GM12878 (cell line): ENCODE measurements at regions of chr9 and their contacts with region 1.

Region 1: DNA sequence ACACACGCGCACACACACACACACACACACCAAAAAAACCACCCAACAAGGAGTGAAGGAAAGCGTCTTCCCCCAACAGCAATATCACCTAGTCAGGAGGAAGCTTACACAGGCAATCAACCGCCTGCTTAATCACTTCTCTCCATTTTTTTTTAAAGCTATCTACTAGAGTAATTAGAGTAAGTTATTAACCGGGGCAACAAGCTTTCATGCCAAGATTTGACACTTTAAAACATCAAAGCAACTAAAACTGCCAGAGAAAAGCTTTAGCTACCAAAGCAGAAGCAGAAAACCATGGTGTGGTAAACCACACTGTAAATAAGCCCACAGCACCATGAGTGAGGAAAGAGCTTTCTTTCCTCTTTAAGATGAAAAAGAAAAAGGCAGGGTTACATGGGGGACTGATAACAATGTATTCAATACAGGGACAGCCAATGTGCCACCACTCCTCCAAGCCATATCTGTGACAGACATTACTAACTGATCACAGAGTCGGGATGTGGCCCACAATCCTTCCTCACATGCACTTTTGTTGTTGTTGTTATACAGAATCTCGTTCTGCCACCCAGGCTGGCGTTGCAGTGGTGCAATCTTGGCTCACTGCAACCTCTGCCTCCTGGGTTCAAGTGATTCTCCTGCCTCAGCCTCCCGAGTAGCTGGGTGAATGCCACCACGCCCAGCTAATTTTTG is 282.1 kb downstream of the CRB2 start:
- DNase-seq: peak; percentile 75
- ATAC-seq: peak; percentile 89
- H3K4me3 ChIP-seq: no peak overlapping the region
- H3K27ac ChIP-seq: no peak overlapping the region
- H3K4me1 ChIP-seq: peaks cover 7% of the 10 kb centered on the region
- H3K27me3 ChIP-seq: no peaks in the 10 kb centered on the region
- CTCF ChIP-seq: no peak
- EP300 ChIP-seq: peak; percentile 65 to 79; a peak in 3 of 4 replicates
- POLR2A ChIP-seq: no peak
- RAD21 ChIP-seq: no peak

Region 2: DNA sequence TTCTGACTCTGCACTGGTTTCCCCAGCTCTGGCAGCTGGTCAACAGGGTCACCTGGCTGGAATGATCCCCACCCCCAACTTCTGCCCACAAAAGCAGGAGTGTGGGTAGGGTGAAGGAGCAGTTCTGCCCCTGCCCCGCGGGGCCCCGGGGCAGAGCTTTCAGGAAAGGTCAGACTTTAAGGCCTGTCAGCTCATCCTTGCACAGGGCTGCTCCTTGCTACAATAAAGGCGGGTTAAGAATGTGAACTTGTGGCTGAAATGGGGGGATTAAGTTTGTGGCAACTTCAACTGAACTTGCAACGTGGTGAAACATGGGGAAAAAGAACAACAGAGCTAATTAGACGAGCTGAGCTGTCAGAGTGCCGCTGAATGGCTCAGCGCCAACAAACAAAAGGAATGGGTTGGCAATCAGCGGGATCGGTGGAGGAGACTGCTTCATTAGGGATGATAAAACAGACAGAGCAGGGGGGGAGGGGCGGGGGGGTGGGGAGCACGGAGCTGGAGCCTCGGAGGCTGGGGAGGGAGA is 231.3 kb before region 1 on chr9:
- CTCF ChIA-PET with region 1: no interaction called
- POLR2A ChIA-PET with region 1: no interaction called
- RAD21 ChIA-PET with region 1: no interaction called
- SMC1A ChIA-PET with region 1: no interaction called
- in situ Hi-C with region 1: no loop called
- intact Hi-C with region 1: no loop called
- DNase-seq: no peak
- ATAC-seq: no peak
- H3K4me3 ChIP-seq: no peak overlapping the region
- H3K27ac ChIP-seq: no peak overlapping the region
- H3K4me1 ChIP-seq: no peaks in the 10 kb centered on the region
- H3K27me3 ChIP-seq: no peaks in the 10 kb centered on the region
- CTCF ChIP-seq: no peak
- EP300 ChIP-seq: no peak
- POLR2A ChIP-seq: no peak
- RAD21 ChIP-seq: no peak

Region 3: GRCh38 chr9:123608104-123608503 is 30.0 kb before region 1 on chr9:
- CTCF ChIA-PET with region 1: interaction called, 4 read pairs
- POLR2A ChIA-PET with region 1: no interaction called
- RAD21 ChIA-PET with region 1: interaction called, 13 read pairs
- SMC1A ChIA-PET with region 1: interaction called, 4 read pairs
- in situ Hi-C with region 1: no loop called
- intact Hi-C with region 1: no loop called
- DNase-seq: peak; percentile 88
- ATAC-seq: peak; percentile 99
- H3K4me3 ChIP-seq: peak overlapping the region; percentile 37; the same call in 1 of the 2 replicates
- H3K27ac ChIP-seq: peak overlapping the region; percentile 58; the same call in 1 of the 2 replicates
- H3K4me1 ChIP-seq: peaks cover 15% of the 10 kb centered on the region
- H3K27me3 ChIP-seq: no peaks in the 10 kb centered on the region
- CTCF ChIP-seq: no peak
- EP300 ChIP-seq: peak; percentile 87 to 89; a peak in 2 of 4 replicates
- POLR2A ChIP-seq: no peak
- RAD21 ChIP-seq: no peak; the same call in 1 of the 2 replicates

Region 4: GRCh38 chr9:123622711-123623241 is 15.3 kb before region 1 on chr9:
- CTCF ChIA-PET with region 1: interaction called, 8 read pairs
- POLR2A ChIA-PET with region 1: interaction called, 8 read pairs
- RAD21 ChIA-PET with region 1: interaction called, 3 read pairs
- SMC1A ChIA-PET with region 1: interaction called, 26 read pairs
- in situ Hi-C with region 1: no loop called
- intact Hi-C with region 1: no loop called
- DNase-seq: no peak
- ATAC-seq: no peak
- H3K4me3 ChIP-seq: no peak overlapping the region
- H3K27ac ChIP-seq: no peak overlapping the region
- H3K4me1 ChIP-seq: no peaks in the 10 kb centered on the region
- H3K27me3 ChIP-seq: no peaks in the 10 kb centered on the region
- CTCF ChIP-seq: no peak
- EP300 ChIP-seq: no peak
- POLR2A ChIP-seq: no peak
- RAD21 ChIP-seq: no peak

Region 5: DNA sequence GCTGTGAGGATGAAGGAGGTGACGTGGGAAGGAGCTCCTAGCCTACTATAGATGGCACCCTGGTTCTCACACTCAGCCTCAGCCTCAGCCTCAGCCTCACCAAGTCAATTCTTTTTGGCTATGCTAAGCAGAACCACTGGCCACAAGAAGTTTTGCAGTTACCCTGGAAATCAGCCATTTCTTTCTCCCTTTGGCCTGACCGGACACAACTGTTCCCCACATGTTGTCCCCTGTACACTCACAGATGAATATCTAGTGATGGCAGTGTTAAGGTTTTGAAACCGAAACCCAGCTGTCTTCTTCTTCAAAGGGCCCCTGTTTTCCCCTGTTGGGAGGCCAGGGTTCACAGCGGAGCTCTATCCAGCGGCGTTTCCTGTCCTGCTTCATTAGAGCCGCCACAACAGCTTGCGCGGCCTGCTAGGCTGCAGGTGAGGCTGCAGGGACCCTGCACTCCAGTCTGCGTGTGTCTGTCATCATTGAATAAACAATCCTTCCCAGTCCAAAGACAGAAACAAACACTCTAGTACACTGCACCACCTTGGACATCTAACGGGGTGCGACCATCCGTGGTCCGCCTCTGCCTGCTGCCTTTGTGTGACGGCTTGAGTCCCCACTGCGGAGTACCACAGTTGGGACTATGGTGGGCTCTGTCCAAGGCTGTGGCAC is 41.4 kb after region 1 on chr9:
- CTCF ChIA-PET with region 1: interaction called, 4 read pairs
- POLR2A ChIA-PET with region 1: interaction called, 4 read pairs
- RAD21 ChIA-PET with region 1: interaction called, 22 read pairs
- SMC1A ChIA-PET with region 1: interaction called, 22 read pairs
- in situ Hi-C with region 1: no loop called
- intact Hi-C with region 1: loop called (anchors 1 kb)
- DNase-seq: peak; percentile 95
- ATAC-seq: peak; percentile 97
- H3K4me3 ChIP-seq: no peak overlapping the region
- H3K27ac ChIP-seq: peak overlapping the region; percentile 72
- H3K4me1 ChIP-seq: peaks cover 31% of the 10 kb centered on the region
- H3K27me3 ChIP-seq: no peaks in the 10 kb centered on the region
- CTCF ChIP-seq: no peak
- EP300 ChIP-seq: peak in 1 of 2 experiments; percentile 82; a peak in 3 of 4 replicates
- POLR2A ChIP-seq: peak; percentile 60; the same call in 1 of the 2 replicates
- RAD21 ChIP-seq: peak; percentile 21; the same call in 1 of the 2 replicates

Region 6: GRCh38 chr9:123696476-123696875 is 58.4 kb after region 1 on chr9:
- CTCF ChIA-PET with region 1: interaction called, 4 read pairs
- POLR2A ChIA-PET with region 1: interaction called, 4 read pairs
- RAD21 ChIA-PET with region 1: interaction called, 7 read pairs
- SMC1A ChIA-PET with region 1: interaction called, 14 read pairs
- in situ Hi-C with region 1: no loop called
- intact Hi-C with region 1: no loop called
- DNase-seq: no peak
- ATAC-seq: no peak
- H3K4me3 ChIP-seq: no peak overlapping the region
- H3K27ac ChIP-seq: no peak overlapping the region
- H3K4me1 ChIP-seq: peaks cover 12% of the 10 kb centered on the region; the same call in 1 of the 2 replicates
- H3K27me3 ChIP-seq: no peaks in the 10 kb centered on the region
- CTCF ChIP-seq: no peak
- EP300 ChIP-seq: no peak
- POLR2A ChIP-seq: no peak
- RAD21 ChIP-seq: no peak

Region 7: GRCh38 chr9:123775289-123776284 is 137.5 kb after region 1 on chr9:
- CTCF ChIA-PET with region 1: interaction called, 4 read pairs
- POLR2A ChIA-PET with region 1: no interaction called
- RAD21 ChIA-PET with region 1: interaction called, 3 read pairs
- SMC1A ChIA-PET with region 1: interaction called, 10 read pairs
- in situ Hi-C with region 1: no loop called
- intact Hi-C with region 1: no loop called
- DNase-seq: no peak
- ATAC-seq: peak; percentile 64
- H3K4me3 ChIP-seq: no peak overlapping the region
- H3K27ac ChIP-seq: no peak overlapping the region
- H3K4me1 ChIP-seq: peaks cover 3% of the 10 kb centered on the region
- H3K27me3 ChIP-seq: no peaks in the 10 kb centered on the region
- CTCF ChIP-seq: no peak
- EP300 ChIP-seq: no peak
- POLR2A ChIP-seq: no peak
- RAD21 ChIP-seq: no peak

Region 8: GRCh38 chr9:124079176-124079925 is 441.3 kb after region 1 on chr9:
- CTCF ChIA-PET with region 1: no interaction called
- POLR2A ChIA-PET with region 1: interaction called, 11 read pairs
- RAD21 ChIA-PET with region 1: no interaction called
- SMC1A ChIA-PET with region 1: no interaction called
- in situ Hi-C with region 1: no loop called
- intact Hi-C with region 1: no loop called
- DNase-seq: no peak
- ATAC-seq: no peak
- H3K4me3 ChIP-seq: no peak overlapping the region
- H3K27ac ChIP-seq: no peak overlapping the region
- H3K4me1 ChIP-seq: no peaks in the 10 kb centered on the region
- H3K27me3 ChIP-seq: no peaks in the 10 kb centered on the region
- CTCF ChIP-seq: no peak
- EP300 ChIP-seq: no peak
- POLR2A ChIP-seq: no peak
- RAD21 ChIP-seq: no peak